Caco-2 (cell line): ENCODE measurements at regions of chr18 and their contacts with region 1.

Region 1: DNA sequence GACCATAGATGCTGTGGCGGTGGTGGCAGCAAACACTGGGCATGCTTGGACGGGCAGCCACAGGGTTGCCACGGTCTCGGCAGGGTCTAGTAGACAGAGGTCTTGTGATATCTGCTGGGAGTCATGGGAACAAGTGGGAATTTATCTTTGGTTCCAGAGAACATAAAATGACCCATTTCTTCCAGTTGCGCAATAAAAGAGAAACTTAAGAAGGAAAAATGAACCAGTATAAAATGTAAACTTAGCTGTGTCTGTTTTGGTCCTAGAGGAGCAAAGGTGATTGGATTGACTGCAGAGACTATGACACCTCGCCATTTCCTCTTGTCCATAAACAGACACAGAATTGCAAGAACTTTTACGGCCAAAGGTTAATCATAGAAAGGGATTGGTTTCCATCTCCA is 132.6 kb upstream of the RBBP8 start:
- DNase-seq: no peak
- H3K4me3 ChIP-seq: no peak overlapping the region
- H3K4me3 Mint-ChIP-seq: no peak overlapping the region
- H3K27ac Mint-ChIP-seq: no peak overlapping the region
- H3K4me1 ChIP-seq: no peaks in the 10 kb centered on the region
- H3K4me1 Mint-ChIP-seq: no peaks in the 10 kb centered on the region
- H3K27me3 ChIP-seq: no peaks in the 10 kb centered on the region
- H3K27me3 Mint-ChIP-seq: no peaks in the 10 kb centered on the region
- CTCF ChIP-seq: no peak

Region 2: GRCh38 chr18:22723773-22724172 is 76.8 kb before region 1 on chr18:
- CTCF ChIA-PET with region 1: no interaction called
- POLR2A ChIA-PET with region 1: no interaction called
- intact Hi-C with region 1: no loop called
- DNase-seq: no peak
- H3K4me3 ChIP-seq: no peak overlapping the region
- H3K4me3 Mint-ChIP-seq: no peak overlapping the region
- H3K27ac Mint-ChIP-seq: no peak overlapping the region
- H3K4me1 ChIP-seq: peaks cover 10% of the 10 kb centered on the region
- H3K4me1 Mint-ChIP-seq: peaks cover 7% of the 10 kb centered on the region
- H3K27me3 ChIP-seq: no peaks in the 10 kb centered on the region
- H3K27me3 Mint-ChIP-seq: no peaks in the 10 kb centered on the region
- CTCF ChIP-seq: no peak

Region 3: DNA sequence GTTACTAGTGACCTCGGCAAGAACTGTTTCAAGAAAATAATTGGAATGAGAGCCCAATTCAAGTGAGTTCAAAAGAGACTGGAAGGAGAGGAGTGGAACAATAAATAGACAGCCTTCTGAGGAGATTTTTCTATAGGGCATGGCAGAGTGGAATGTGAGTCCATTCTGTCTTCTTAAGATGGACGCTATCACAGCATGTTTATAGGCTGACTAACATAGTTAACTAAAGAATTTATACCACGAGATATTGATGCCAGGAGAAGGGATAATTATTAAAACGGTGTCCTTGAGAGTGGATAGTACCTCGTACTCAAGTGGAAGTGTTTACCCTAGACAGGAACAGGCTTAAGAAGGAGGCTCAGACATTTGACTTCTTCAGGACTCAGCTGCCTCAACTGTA is 11.0 kb before region 1 on chr18:
- CTCF ChIA-PET with region 1: no interaction called
- POLR2A ChIA-PET with region 1: no interaction called
- intact Hi-C with region 1: no loop called
- DNase-seq: no peak
- H3K4me3 ChIP-seq: no peak overlapping the region
- H3K4me3 Mint-ChIP-seq: no peak overlapping the region
- H3K27ac Mint-ChIP-seq: peak overlapping the region; percentile 11
- H3K4me1 ChIP-seq: no peaks in the 10 kb centered on the region
- H3K4me1 Mint-ChIP-seq: peaks cover 8% of the 10 kb centered on the region
- H3K27me3 ChIP-seq: no peaks in the 10 kb centered on the region
- H3K27me3 Mint-ChIP-seq: no peaks in the 10 kb centered on the region
- CTCF ChIP-seq: no peak

Region 4: DNA sequence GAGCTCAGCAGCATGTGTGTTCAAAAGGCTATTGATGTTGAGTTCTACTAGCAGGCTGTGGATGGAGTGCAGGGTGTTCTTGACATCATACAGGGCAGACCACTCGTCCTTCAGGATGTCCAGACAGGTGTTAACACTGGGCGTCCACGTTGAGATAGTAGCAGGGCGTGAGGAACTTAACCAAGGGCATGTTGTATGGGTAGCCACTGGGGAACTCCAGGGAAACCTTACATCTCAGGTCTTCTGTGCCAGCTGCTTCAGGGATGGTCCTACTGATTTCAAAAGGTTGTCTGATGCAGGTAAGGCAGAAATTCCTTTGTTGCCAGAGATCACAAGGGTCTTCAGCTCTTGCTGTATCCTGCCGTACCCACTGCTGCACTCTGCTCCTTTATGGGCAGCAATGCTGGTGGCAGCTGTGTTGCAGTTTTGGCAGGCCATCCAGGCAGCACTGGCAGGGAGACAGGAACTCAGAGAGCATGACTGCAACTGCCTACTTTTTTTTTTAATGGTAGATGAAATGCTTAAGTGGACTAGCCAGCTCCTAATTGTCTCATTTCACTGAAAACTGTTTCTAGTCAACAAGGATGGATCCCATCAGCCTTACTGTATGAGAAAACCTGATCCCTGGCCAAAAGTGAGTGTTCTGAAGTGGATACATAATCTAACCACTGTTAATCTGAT is 100.1 kb after region 1 on chr18:
- CTCF ChIA-PET with region 1: no interaction called
- POLR2A ChIA-PET with region 1: no interaction called
- intact Hi-C with region 1: no loop called
- DNase-seq: no peak
- H3K4me3 ChIP-seq: no peak overlapping the region
- H3K4me3 Mint-ChIP-seq: no peak overlapping the region
- H3K27ac Mint-ChIP-seq: no peak overlapping the region
- H3K4me1 ChIP-seq: no peaks in the 10 kb centered on the region
- H3K4me1 Mint-ChIP-seq: no peaks in the 10 kb centered on the region
- H3K27me3 ChIP-seq: no peaks in the 10 kb centered on the region
- H3K27me3 Mint-ChIP-seq: no peaks in the 10 kb centered on the region
- CTCF ChIP-seq: no peak

Region 5: GRCh38 chr18:22983175-22983574 is 182.6 kb after region 1 on chr18:
- CTCF ChIA-PET with region 1: interaction called, 19 read pairs
- POLR2A ChIA-PET with region 1: no interaction called
- intact Hi-C with region 1: no loop called
- DNase-seq: no peak
- H3K4me3 ChIP-seq: no peak overlapping the region
- H3K4me3 Mint-ChIP-seq: no peak overlapping the region
- H3K27ac Mint-ChIP-seq: no peak overlapping the region
- H3K4me1 ChIP-seq: no peaks in the 10 kb centered on the region
- H3K4me1 Mint-ChIP-seq: peaks cover 6% of the 10 kb centered on the region
- H3K27me3 ChIP-seq: no peaks in the 10 kb centered on the region
- H3K27me3 Mint-ChIP-seq: no peaks in the 10 kb centered on the region
- CTCF ChIP-seq: peak; percentile 30 to 43